Activated B cell treated with CpG ODN at 0.5 μM for 24 hours (primary cell): ENCODE measurements at regions of chr20 and their contacts with region 1.

Region 1: DNA sequence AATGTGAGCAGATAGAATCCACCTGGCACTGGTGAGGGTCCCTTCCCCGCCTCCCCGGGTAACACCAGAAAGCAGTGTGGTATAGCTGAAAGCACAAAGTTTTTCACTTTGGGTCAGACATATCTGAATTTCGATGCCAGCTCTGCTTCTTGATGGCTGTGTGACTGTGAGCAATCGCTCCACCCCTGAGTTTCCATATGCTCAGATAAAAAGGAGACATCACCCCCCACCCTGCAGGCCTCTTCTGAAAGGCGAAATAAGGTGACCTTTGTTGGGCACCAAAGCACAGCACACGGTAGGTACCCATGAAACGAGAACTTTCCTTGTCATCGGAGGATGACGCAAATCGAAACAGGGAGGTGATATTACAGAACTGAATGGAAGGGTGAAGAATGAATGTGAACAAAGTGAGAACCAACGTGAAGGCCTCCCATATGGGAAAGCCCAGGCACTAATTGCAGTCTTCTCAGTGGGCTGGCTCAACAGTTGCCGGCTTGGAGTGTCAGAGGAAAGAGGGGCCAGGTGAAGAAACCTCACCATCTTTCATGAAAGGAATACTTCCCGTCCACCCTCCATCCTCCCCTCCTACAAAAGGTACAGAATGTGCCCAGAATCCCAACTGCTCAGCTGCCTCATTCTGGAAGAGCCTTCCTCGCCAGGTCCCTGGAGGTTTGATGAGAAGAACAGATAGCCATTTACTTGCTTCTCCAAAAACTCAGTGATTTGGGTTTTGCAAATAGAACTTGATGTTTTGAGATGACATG is 61.8 kb downstream of the NFATC2 start:
- DNase-seq: no peak
- ATAC-seq: peak; percentile 84
- H3K4me3 Mint-ChIP-seq: peak overlapping the region; percentile 48
- H3K27ac Mint-ChIP-seq: peak overlapping the region; percentile 80
- H3K4me1 Mint-ChIP-seq: peaks cover 38% of the 10 kb centered on the region
- H3K27me3 Mint-ChIP-seq: no peaks in the 10 kb centered on the region
- CTCF ChIP-seq: no peak

Region 2: GRCh38 chr20:49846206-49846807 is 1634.4 kb before region 1 on chr20:
- CTCF ChIA-PET with region 1: no interaction called
- POLR2A ChIA-PET with region 1: no interaction called
- intact Hi-C with region 1: no loop called
- DNase-seq: no peak
- ATAC-seq: peak; percentile 82
- H3K4me3 Mint-ChIP-seq: no peak overlapping the region
- H3K27ac Mint-ChIP-seq: no peak overlapping the region
- H3K4me1 Mint-ChIP-seq: peaks cover 17% of the 10 kb centered on the region
- H3K27me3 Mint-ChIP-seq: no peaks in the 10 kb centered on the region
- CTCF ChIP-seq: no peak

Region 3: DNA sequence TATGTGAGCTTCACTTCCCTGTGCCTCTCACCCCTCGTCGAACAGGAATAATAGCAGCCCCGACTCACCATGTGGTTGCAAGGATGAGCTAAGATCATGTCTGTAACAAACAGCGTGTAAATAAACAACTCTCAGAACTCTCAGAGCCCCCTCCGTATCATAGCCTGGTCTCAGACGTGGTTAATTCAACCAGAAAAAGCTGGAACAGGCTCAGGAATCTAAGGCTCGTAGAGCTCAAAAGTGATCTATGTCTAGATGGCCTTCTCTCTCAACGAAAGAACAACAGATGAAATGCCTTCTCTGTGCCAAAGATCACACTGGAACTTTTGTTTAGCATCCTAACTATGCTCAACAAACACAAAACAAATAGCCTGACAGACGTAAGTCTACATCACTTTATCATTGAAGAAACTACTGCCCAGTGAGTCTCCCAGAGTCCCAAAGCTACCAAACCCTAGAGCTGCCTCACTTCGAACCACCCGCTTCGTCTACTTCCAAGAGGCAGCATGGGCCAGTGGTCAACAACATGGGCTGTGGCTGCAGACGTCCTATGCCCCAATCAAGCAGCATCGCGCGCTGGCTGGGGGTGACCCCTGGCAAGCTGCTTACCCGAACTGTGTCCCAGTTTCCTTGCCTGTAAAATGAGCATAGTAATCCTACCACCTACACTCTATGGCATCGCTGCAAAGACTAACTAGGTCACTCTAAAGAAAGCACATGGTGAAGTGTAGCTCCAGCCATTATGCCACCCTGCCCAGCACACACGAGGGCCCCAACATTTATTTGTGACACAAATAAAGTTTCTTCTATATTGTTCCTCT is 26.7 kb after region 1 on chr20:
- CTCF ChIA-PET with region 1: no interaction called
- POLR2A ChIA-PET with region 1: no interaction called
- intact Hi-C with region 1: no loop called
- DNase-seq: no peak
- ATAC-seq: no peak
- H3K4me3 Mint-ChIP-seq: no peak overlapping the region
- H3K27ac Mint-ChIP-seq: no peak overlapping the region
- H3K4me1 Mint-ChIP-seq: peaks cover 51% of the 10 kb centered on the region
- H3K27me3 Mint-ChIP-seq: no peaks in the 10 kb centered on the region
- CTCF ChIP-seq: no peak

Region 4: DNA sequence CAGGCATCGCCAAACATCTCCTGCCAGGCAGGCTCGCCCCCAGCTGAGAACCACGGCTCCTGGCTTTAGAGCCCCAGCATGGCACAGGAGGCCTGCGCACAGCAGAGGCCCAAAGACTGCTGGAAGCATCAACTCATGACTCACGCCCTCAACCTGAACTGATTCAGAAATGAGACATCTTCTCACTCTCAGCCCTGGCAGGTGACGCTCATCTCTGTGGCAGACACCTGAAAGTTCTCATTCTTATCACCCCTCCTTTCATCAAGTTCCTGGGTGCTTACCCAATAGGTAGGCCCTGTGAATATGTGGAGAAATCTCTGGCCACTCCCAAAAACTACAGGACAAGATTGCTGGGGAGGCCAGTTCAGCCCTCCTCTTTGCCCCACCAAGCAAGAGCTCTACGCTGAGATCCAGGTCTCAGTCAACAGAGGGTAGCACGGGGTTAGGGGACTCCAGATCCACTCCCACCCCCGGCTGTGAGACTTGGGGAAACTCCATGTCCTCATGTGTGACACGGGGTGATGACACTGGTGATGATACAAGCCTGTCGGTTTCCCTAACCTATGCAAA is 50.5 kb after region 1 on chr20:
- CTCF ChIA-PET with region 1: no interaction called
- POLR2A ChIA-PET with region 1: interaction called, 3 read pairs
- intact Hi-C with region 1: loop called (anchors 2 kb)
- DNase-seq: no peak
- ATAC-seq: peak; percentile 55
- H3K4me3 Mint-ChIP-seq: peak overlapping the region; percentile 62
- H3K27ac Mint-ChIP-seq: peak overlapping the region; percentile 89
- H3K4me1 Mint-ChIP-seq: peaks cover 92% of the 10 kb centered on the region
- H3K27me3 Mint-ChIP-seq: no peaks in the 10 kb centered on the region
- CTCF ChIP-seq: no peak